Activated CD4-positive, alpha-beta T cell treated with anti-CD3 and anti-CD28 coated beads, Interleukin-2, amount 10 ng/mL, durations not matched to agents 7 days and 5 days (primary cell): ENCODE measurements at regions of chr11 and their contacts with region 1.

Region 1: GRCh38 chr11:76152086-76152681 is 54.1 kb downstream of the WNT11 start:
- DNase-seq: peak; percentile 85
- H3K4me3 Mint-ChIP-seq: peak overlapping the region; percentile 37
- H3K27ac Mint-ChIP-seq: no peak overlapping the region
- H3K4me1 Mint-ChIP-seq: peaks cover 23% of the 10 kb centered on the region
- H3K27me3 Mint-ChIP-seq: peaks cover 10% of the 10 kb centered on the region

Region 2: GRCh38 chr11:75896843-75897419 is 255.3 kb before region 1 on chr11:
- CTCF ChIA-PET with region 1: interaction called, 12 read pairs
- POLR2A ChIA-PET with region 1: interaction called, 3 read pairs
- DNase-seq: no peak
- H3K4me3 Mint-ChIP-seq: no peak overlapping the region
- H3K27ac Mint-ChIP-seq: no peak overlapping the region
- H3K4me1 Mint-ChIP-seq: peaks cover 3% of the 10 kb centered on the region
- H3K27me3 Mint-ChIP-seq: no peaks in the 10 kb centered on the region

Region 3: GRCh38 chr11:75903276-75903675 is 248.9 kb before region 1 on chr11:
- CTCF ChIA-PET with region 1: interaction called, 12 read pairs
- POLR2A ChIA-PET with region 1: no interaction called
- DNase-seq: no peak
- H3K4me3 Mint-ChIP-seq: no peak overlapping the region
- H3K27ac Mint-ChIP-seq: no peak overlapping the region
- H3K4me1 Mint-ChIP-seq: peaks cover 8% of the 10 kb centered on the region
- H3K27me3 Mint-ChIP-seq: no peaks in the 10 kb centered on the region

Region 4: GRCh38 chr11:76140912-76141574 is 11.1 kb before region 1 on chr11:
- CTCF ChIA-PET with region 1: interaction called, 14 read pairs
- POLR2A ChIA-PET with region 1: no interaction called
- DNase-seq: no peak
- H3K4me3 Mint-ChIP-seq: no peak overlapping the region
- H3K27ac Mint-ChIP-seq: no peak overlapping the region
- H3K4me1 Mint-ChIP-seq: no peaks in the 10 kb centered on the region
- H3K27me3 Mint-ChIP-seq: no peaks in the 10 kb centered on the region